ENCODE measurements at regions of chr22 and their contacts with region 1.

Region 1: GRCh38 chr22:39003165-39003638 is 10.9 kb upstream of the APOBEC3C start:
- DNase-seq: peak in 3 of 4 donors; percentile 70 to 87 (median 80)
- ATAC-seq: peak; percentile 99
- H3K4me3 ChIP-seq: no peak overlapping the region
- H3K27ac ChIP-seq: no peak overlapping the region
- H3K4me1 ChIP-seq: peaks cover 0 to 15% of the 10 kb centered on the region in 2 donors
- H3K27me3 ChIP-seq: peaks cover 0 to 13% of the 10 kb centered on the region in 2 donors
- CTCF ChIP-seq: peak; percentile 61 to 78

Region 2: DNA sequence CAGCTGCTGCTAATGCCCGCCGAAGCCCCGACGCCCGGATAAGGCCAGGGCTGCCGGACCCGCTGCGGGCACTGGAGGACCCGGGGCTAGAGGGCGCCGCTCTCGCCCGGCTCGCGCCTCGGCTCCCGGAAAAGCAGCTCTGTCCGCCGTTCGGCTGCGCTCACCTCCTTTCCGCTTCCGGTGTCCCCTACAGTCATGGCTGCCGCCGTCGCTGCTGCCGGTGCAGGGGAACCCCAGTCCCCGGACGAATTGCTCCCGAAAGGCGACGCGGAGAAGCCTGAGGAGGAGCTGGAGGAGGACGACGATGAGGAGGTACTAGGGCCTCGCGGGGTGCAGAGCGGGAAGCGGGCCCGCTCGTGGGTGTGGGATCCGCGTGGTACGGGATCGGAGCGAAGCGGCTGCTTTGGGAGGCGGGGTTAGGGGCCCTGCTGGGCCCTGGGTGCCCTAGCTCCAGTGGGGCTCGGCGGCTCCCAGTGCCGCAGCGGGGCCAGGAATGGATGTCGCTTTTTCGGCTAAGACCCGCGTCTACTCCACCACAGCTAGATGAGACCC is 321.3 kb before region 1 on chr22 and contains the start of gene TOMM22:
- intact Hi-C with region 1: no loop called
- DNase-seq: peak; percentile 81 to 99 (median 90)
- ATAC-seq: peak; percentile 99
- H3K4me3 ChIP-seq: peak within 1 kb of the TSS; percentile 81 to 100
- H3K27ac ChIP-seq: peak within 1 kb of the TSS; percentile 51 to 72
- H3K4me1 ChIP-seq: peaks cover 8 to 17% of the 10 kb centered on the region in 2 donors
- H3K27me3 ChIP-seq: no peaks in the 10 kb centered on the region
- CTCF ChIP-seq: peak; percentile 36
- polyA plus RNA-seq, gene TOMM22: 72.5 to 91.3 (median 84.0) TPM

Region 3: DNA sequence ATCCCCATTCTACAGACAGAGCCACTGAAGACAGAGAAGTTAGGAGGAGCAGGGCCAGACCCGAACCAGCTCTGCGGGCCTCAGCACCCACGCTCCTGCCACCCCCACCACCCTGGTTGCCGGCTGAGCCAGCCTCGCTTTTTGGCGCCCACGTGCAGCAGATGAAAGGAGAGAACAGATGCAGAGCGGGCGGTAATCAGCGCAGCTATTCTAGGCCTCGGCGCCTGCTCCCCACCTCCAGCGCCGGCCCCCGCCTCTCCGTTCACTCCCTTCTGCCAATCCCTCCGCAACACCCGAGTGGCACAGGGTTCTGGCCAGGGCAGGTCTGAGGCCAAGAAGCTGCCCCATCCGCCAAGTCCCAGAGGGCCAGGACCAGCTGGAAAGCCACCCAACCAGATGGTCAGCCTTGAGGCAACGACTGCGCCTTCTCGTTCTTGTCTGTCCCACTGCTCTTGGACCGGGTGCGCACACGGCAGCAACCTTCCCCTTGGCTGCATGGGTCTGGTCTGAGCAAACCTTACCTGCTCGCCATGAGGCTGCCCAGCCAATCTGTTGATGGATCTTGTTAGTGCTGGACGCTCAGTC is 226.0 kb before region 1 on chr22:
- intact Hi-C with region 1: loop called in 1 of 2 experiments (anchors 10 kb)
- DNase-seq: no peak
- ATAC-seq: no peak
- H3K4me3 ChIP-seq: no peak overlapping the region
- H3K27ac ChIP-seq: no peak overlapping the region
- H3K4me1 ChIP-seq: peaks cover 0 to 2% of the 10 kb centered on the region in 2 donors
- H3K27me3 ChIP-seq: no peaks in the 10 kb centered on the region
- CTCF ChIP-seq: no peak

Region 4: DNA sequence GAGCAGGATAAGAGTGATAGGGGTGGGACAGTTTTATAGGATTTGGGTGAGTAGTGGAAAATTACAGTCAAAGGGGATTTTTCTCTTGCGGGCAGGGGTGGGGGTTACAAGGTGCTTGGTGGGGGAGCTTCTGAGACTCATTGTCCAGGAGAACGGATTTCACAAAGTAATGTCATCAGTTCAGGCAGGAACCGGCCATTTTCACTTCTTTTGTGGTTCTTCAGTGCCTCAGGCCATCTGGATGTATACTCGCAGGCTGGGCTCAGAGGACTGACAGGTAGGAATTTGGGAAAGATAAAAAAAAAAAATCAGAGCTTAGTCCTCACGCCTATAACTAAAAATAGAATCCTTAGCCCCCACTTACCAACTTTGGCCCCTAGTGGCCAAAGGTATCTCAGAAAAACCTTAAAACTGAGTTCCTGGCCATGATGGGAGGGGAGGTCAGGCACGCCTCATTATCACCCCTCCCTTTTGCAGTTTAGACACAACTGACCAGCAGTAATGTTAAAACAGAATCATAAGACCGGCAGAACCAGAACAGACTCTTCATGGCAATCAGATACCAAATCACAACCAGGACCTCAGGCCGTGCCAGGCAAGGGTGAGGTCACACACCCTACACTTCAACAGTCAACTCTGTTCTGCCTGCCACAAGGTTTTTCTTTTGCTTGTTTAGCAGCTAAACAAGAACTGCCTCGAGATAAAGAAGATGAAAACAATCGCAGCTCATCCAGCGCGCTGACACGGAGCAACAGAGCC is 65.0 kb after region 1 on chr22:
- intact Hi-C with region 1: no loop called
- DNase-seq: no peak
- ATAC-seq: no peak
- H3K4me3 ChIP-seq: no peak overlapping the region
- H3K27ac ChIP-seq: no peak overlapping the region
- H3K4me1 ChIP-seq: no peaks in the 10 kb centered on the region
- H3K27me3 ChIP-seq: no peaks in the 10 kb centered on the region
- CTCF ChIP-seq: no peak

Region 5: DNA sequence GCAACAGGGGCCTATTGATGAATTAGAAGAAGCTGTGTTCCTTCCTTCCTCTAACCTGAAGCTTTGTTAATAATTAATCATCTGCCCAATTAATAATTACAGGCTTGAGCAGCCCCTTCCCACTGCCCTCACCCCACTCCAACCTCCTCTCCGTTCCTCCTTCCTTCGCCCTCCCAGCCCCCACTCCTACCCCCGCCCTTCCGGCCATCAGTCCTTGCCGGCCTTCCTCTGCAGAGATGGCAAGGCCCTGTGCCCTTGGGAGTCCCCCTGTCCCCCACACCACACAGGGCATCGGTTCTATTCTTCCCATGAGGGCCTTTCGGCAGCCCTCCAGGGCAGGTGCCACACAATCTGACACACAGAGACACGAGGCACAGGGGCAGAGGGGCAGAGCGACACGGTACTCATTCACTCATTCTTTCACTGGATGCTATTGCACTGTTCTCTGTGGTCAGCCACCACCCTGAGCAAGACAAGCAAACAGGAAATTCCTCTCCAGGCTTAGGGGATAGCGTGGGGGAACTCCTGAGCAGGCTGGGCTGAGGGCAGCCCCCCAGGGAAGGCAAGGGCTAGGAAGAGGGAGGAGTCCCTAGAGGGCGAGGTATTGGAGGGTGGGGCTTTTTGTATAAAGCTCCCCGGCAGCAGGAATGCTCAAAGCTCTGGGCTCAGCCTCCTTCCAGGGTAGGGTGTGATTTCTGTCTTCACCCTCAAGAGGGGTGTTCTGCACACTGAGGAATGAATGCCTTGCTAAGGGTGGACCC is 468.4 kb after region 1 on chr22:
- intact Hi-C with region 1: no loop called
- DNase-seq: no peak
- ATAC-seq: peak; percentile 53
- H3K4me3 ChIP-seq: no peak overlapping the region
- H3K27ac ChIP-seq: peak overlapping the region; percentile 69 to 71
- H3K4me1 ChIP-seq: peaks cover 10 to 50% of the 10 kb centered on the region in 2 donors
- H3K27me3 ChIP-seq: peaks cover 0 to 11% of the 10 kb centered on the region in 2 donors
- CTCF ChIP-seq: no peak

Measured in left lung (tissue), 14 donors.